K562 (cell line): ENCODE measurements at regions of chr9 and their contacts with region 1.

Region 1: GRCh38 chr9:135980926-135981630 is 19.9 kb upstream of the UBAC1 start:
- DNase-seq: no peak
- ATAC-seq: no peak
- H3K4me3 ChIP-seq: no peak overlapping the region
- H3K27ac ChIP-seq: no peak overlapping the region
- H3K4me1 ChIP-seq: peaks cover 23 to 66% of the 10 kb centered on the region in 2 experiments
- H3K27me3 ChIP-seq: peaks cover 20 to 51% of the 10 kb centered on the region in 2 experiments; a peak in 4 of 5 replicates
- CTCF ChIP-seq: no peak
- EP300 ChIP-seq: no peak
- POLR2A ChIP-seq: no peak
- RAD21 ChIP-seq: no peak

Region 2: DNA sequence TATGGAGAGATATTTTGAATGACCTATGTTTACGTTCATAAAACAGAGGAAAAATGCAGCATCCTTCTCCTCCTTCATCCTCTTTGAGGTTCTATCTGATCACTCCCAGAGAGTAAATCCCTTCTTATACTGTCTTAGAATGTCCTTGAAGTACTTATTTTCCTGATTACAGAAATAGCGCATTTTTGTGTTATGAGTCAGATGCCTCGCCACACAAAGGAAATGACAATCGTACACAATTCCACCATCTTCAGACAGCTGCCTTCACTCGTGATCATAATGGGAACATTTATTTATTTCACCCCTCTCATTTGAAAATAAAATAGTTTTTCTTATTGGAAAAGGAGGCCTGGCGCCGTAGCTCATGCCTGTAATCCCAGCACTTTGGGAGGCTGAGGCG is 339.3 kb before region 1 on chr9:
- CTCF ChIA-PET with region 1: no interaction called
- POLR2A ChIA-PET with region 1: no interaction called
- in situ Hi-C with region 1: no loop called
- intact Hi-C with region 1: no loop called
- DNase-seq: no peak
- ATAC-seq: no peak
- H3K4me3 ChIP-seq: no peak overlapping the region
- H3K27ac ChIP-seq: no peak overlapping the region
- H3K4me1 ChIP-seq: no peaks in the 10 kb centered on the region
- H3K27me3 ChIP-seq: 0 out of 5 replicates have a peak, but pooled peaks cover 2 to 4% of the 10 kb centered on the region in 2 experiments
- CTCF ChIP-seq: no peak
- EP300 ChIP-seq: no peak
- POLR2A ChIP-seq: no peak
- RAD21 ChIP-seq: no peak

Region 3: GRCh38 chr9:136109351-136110081 is 128.4 kb after region 1 on chr9:
- CTCF ChIA-PET with region 1: no interaction called
- POLR2A ChIA-PET with region 1: no interaction called
- in situ Hi-C with region 1: loop called (anchors 5 kb)
- intact Hi-C with region 1: no loop called
- DNase-seq: peak; percentile 76 to 87 (median 82)
- ATAC-seq: peak; percentile 82
- H3K4me3 ChIP-seq: peak overlapping the region; percentile 36
- H3K27ac ChIP-seq: peak overlapping the region; percentile 79
- H3K4me1 ChIP-seq: peaks cover 48 to 80% of the 10 kb centered on the region in 2 experiments
- H3K27me3 ChIP-seq: no peaks in the 10 kb centered on the region
- CTCF ChIP-seq: no peak
- EP300 ChIP-seq: no peak
- POLR2A ChIP-seq: peak; percentile 66
- RAD21 ChIP-seq: no peak

Region 4: DNA sequence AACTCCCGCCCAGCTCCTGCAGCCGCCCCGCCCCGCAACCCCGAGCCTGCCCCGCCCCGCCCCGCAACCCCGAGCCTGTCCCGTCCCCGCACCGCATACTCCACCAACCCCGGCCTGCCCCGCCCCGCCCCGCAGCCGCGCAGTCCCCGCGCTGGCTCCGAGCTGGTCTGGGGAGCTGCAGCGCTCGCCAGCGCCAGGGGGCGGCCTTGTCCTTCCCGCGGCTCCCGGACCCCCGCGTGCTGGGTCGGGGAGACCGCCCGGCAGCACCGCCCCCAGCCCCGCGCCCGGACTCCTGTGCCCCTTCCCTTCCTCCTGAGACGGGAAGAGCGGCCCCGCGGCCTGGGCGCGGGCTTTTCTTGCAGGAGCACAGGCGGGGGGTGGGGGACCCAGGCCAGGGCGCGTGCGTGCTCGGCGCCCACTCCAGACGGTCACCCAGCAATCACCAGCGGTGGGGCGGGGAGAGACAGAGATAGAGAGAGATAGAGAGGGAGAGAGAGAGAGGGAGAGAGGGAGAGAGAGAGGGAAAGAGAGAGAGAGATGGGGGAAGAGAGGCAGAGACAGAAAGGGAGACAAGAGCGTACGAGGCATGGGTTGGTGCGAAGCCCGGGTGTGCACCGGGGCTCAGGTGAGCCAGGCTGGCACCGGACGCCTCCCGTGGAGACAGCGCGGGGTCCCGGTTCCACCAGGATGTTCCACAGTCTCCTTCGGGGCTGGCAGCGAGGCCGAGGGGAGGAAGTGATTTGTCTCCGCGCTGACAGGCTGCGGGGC is 152.3 kb after region 1 on chr9:
- CTCF ChIA-PET with region 1: no interaction called
- POLR2A ChIA-PET with region 1: no interaction called
- in situ Hi-C with region 1: no loop called
- intact Hi-C with region 1: no loop called
- DNase-seq: peak; percentile 74 to 95 (median 90)
- ATAC-seq: peak; percentile 96
- H3K4me3 ChIP-seq: peak overlapping the region; percentile 46
- H3K27ac ChIP-seq: no peak overlapping the region
- H3K4me1 ChIP-seq: peaks cover 8 to 58% of the 10 kb centered on the region in 2 experiments
- H3K27me3 ChIP-seq: peaks cover 41 to 79% of the 10 kb centered on the region in 2 experiments
- CTCF ChIP-seq: peak; percentile 46 to 70 (median 61); a peak in 5 of 6 replicates
- EP300 ChIP-seq: no peak
- POLR2A ChIP-seq: no peak
- RAD21 ChIP-seq: peak; percentile 46 to 66